Activated CD4-positive, alpha-beta T cell treated with anti-CD3 and anti-CD28 coated beads, Interleukin-2, amount 10 ng/mL, durations not matched to agents 24 days and 14 days (primary cell): ENCODE measurements at regions of chr22 and their contacts with region 1.

Region 1: DNA sequence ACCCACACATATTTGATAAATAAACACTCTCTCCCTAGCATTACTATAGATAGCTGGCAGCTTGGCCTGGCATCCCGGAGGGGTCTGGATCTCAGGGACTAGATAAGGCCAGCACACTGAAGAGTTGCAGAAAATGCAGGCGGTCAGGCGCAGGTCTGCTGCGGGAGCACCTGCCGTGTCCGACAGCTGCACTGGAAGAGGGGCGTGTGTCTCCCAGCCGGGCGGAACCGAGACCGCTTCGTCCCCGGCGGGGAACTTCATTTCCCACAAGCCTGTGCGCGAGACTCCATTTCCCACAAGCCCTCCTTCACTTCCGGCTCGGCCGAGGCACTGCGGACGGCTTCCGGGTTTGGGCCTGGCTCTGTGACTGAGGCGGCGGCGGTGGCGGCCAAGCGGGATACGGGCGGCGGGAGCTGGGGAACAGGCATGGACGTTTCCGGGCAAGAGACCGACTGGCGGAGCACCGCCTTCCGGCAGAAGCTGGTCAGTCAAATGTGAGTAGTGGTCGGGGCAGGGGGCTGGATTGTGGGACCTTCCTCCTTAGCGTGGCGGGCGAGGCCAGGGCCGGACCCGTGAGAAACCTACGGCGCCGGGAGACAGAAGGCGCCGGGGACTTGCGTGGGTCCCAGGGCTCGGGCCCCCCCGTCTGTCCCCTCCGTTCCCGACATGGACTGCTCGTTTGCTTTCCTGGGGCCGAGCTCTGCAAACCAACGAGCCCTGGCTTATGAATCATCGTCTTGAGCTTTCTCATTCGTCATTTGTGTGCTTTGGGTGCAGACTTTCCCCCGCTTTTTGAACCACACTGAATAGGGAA is at the start of gene MED15:
- DNase-seq: peak; percentile 97
- H3K4me3 Mint-ChIP-seq: peak within 1 kb of the TSS; percentile 96
- H3K27ac Mint-ChIP-seq: peak within 1 kb of the TSS; percentile 95
- H3K4me1 Mint-ChIP-seq: peaks cover 42% of the 10 kb centered on the region
- H3K27me3 Mint-ChIP-seq: no peaks in the 10 kb centered on the region
- total RNA-seq, gene MED15: 113 and 117 TPM in 2 replicates

Region 2: GRCh38 chr22:20319745-20320658 is 187.5 kb before region 1 on chr22 and contains the start of gene DGCR6L:
- intact Hi-C with region 1: loop called (anchors 2 kb)
- DNase-seq: peak; percentile 99
- H3K4me3 Mint-ChIP-seq: peak within 1 kb of the TSS; percentile 97
- H3K27ac Mint-ChIP-seq: peak within 1 kb of the TSS; percentile 84
- H3K4me1 Mint-ChIP-seq: peaks cover 50% of the 10 kb centered on the region
- H3K27me3 Mint-ChIP-seq: no peaks in the 10 kb centered on the region
- total RNA-seq, gene DGCR6L: 37.2 TPM in 2 replicates

Region 3: DNA sequence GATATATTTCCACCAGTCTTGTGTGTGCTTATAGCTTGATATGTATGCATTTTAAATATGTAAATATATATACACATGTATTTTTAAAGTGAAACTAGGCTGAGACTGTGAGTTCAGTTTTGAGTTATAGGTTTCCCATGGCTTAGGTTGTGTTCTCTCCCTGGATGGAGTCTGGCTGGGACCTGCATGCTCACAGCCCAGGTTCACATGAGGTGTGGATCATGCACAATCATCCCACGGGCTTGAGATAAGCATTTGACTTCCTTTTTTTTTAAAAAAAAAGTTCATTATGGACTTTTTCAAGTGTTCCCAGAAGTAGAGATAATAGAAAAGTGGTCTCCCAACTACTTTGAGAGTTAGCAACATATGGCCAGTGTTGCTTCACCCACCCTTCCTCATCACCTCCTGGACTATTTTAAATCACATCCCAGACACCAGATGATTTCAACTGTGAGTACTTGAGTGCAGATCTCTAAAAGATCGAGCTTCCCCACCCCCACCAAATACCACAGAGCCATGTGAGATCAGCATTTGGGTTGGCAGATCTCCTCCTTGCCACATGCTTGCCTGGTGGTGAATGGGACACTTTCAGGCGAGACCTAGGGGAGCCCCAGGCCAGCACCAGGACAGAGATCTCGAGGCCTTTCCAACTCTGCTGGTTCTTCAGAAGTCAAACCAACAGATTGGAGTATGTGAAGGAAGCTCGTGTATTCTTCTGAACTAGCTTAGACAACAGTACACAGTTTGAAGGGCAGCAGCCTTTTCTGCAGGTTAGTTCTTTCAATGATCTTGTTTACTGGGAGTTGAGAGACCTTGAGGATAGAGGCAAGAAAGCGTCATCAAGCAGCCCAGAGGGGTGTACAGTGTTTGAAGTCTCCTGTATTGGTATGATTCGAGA is 15.9 kb after region 1 on chr22:
- intact Hi-C with region 1: loop called (anchors 2 kb)
- DNase-seq: peak; percentile 65
- H3K4me3 Mint-ChIP-seq: peak overlapping the region; percentile 49
- H3K27ac Mint-ChIP-seq: peak overlapping the region; percentile 76
- H3K4me1 Mint-ChIP-seq: peaks cover 49% of the 10 kb centered on the region
- H3K27me3 Mint-ChIP-seq: no peaks in the 10 kb centered on the region

Region 4: DNA sequence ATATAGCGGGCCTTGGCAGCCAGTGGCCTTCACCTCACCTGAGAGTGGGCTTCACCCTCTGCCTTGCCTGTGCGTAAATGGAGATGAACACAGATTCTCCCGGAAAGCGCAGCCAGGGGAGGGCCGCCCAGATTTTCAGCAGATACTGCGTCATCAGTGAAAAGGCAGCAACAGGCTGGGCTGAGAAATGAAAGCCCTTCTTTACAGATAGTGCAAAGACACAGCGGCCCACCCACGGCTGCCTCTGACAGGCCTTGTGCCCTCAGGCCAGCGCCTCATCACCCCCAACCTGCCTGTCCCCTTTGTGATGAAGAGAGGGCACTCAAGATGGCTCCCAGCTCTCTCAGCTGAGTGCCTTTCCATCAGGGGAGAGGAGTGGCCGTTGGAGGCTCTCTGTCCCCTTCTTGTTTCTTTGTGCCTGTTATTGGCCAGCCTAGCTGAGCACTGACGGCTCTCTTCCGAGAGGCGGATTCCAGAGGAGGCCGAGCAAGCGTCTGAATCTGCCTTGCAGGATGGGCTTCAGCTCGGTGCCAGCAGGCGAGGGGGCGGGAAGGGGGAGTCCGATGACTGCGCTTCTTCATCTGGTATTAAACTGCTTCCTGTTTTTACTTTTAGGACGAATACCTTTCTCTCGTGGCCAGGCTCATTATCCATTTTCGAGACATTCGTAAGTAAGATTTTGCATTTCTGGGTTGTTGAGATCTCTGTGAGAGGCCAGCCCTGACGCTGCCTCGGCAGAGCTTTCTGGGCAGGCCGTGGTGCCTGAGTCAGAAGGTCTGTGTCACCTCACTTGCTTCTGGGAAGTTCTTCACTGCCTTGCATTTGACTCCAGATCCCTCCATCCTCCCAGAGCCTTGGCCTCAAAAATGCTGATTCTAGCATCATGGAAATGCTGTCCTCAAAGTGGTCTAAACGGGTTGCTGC is 43.6 kb after region 1 on chr22:
- intact Hi-C with region 1: loop called (anchors 5 kb)
- DNase-seq: peak; percentile 78
- H3K4me3 Mint-ChIP-seq: peak overlapping the region; percentile 78
- H3K27ac Mint-ChIP-seq: peak overlapping the region; percentile 94
- H3K4me1 Mint-ChIP-seq: peaks cover 56% of the 10 kb centered on the region
- H3K27me3 Mint-ChIP-seq: no peaks in the 10 kb centered on the region

Region 5: DNA sequence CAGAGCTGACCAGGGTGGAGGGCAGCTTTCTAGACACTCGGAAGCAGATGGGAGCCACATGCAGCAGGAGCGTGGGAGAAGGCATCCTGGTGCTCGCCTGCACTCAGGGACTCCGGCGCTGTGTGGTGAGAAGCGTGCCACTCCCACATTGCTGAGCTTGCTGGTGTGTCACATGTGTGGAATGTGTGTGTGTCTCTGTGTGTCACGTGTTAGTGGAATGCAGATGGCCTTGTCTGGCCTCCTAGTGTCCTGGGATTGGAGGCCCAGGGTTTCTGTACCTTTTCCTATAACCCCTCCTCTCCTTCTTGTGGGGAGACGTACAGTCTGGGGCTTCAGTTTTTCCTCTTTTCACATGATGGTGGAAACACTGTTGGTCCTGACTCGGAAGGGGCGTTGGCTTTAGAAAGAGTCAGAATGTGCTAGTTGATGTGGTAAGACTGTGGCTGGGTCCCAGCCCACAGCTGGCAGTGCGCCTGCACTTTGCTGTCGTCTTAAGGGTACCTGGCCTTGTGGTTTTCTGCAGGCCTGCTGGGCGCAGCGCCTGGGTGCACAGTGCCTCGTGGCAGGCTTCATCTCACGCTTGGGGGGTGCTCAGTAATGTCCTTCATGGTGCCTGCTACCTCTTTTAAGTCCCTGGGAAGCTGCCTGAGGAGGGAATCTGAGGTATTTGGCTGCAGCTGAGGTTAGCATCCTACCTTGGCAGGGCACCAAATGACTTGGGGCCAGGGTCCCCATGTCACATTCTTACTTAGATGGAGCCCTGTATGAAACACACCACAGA is 61.7 kb after region 1 on chr22:
- intact Hi-C with region 1: loop called (anchors 2 kb)
- DNase-seq: peak; percentile 93
- H3K4me3 Mint-ChIP-seq: peak overlapping the region; percentile 72
- H3K27ac Mint-ChIP-seq: peak overlapping the region; percentile 83
- H3K4me1 Mint-ChIP-seq: peaks cover 65% of the 10 kb centered on the region
- H3K27me3 Mint-ChIP-seq: no peaks in the 10 kb centered on the region